PC-9 (cell line): ENCODE measurements at regions of chr19 and their contacts with region 1.

Region 1: DNA sequence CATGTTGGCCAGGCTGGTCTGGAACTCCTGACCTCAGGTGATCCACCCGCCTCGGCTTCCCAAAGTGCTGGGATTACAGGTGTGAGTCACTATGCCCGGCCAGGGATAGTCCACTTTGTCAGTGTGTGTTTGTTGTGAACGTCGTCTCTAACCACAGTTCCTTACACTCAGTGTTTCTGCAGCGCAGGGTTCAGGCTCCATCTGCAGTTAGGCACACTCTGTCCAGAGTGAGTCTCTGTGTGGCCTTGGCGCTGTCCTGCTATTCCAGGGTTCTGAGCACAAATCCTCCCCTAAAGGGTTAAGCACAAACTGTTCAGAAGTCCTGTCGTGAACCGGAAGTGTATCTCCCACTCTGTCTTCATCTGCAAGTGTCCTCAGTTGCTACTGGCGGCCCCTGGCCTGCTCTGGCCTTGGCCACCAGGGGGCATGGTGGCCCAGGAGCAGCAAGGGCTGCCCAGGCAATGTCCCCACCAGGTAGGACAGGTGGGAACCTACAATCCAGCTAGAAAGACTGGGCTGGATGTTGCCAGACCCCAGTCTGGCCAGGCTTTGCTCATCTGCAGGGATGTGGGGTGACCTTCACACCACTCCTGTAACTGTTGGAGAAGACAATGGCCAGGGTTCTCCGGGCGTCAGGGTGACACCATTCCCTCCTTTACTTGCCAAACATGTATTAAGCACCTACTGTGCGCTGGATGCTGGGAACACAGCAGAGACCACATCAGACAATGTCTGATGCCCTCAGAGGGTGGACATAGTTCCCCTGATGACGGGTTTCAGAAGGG is 38.7 kb upstream of the GATAD2A start:
- DNase-seq: peak; percentile 85 to 89
- H3K4me3 ChIP-seq: no peak overlapping the region; the same call in 1 of the 2 replicates
- H3K27ac ChIP-seq: no peak overlapping the region
- H3K4me1 ChIP-seq: peaks cover 30% of the 10 kb centered on the region
- H3K27me3 ChIP-seq: no peaks in the 10 kb centered on the region
- CTCF ChIP-seq: peak; percentile 98

Region 2: DNA sequence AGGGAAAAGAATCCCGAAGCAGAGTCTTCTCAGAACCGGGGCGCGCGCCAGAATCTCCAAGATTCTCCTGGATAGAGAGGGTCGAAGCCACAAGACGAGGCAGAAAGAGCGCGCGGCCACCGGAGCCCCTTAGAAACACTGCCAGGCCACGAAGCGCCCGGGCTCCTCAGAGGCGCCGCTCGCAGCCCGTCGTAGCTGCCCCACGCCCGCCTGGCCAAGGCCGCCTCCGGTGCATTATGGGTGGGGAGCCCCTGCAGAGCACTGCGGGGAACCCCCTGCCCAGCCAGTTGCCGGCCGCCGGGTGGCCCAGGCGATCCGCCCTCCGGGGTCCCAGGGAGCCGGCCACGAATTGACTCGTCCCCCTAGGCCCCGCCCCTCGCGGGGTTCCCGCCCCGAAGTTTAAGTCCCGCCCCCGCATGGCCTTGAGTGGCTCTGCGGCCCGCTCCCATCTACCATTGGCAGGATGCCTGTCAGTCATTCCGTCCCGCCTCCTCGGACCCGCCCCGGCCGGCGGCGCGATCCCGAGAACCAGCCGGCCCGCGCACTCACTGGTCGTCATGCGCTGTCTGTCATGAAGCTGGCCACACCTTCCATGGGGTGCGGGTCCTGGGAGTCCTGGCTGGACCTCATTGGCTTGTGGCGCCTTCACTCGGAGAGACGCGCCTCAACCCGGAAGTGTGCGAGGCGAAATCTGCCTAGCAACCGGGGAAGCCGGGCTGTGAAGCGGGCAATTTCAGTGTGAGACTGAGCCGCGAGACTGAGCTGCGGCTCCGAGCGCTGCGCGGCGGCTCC is 18.5 kb after region 1 on chr19:
- CTCF ChIA-PET with region 1: interaction called, 5 read pairs
- POLR2A ChIA-PET with region 1: interaction called, 4 read pairs
- intact Hi-C with region 1: loop called (anchors 1 kb)
- DNase-seq: peak; percentile 99 to 100
- H3K4me3 ChIP-seq: peak overlapping the region; percentile 56
- H3K27ac ChIP-seq: peak overlapping the region; percentile 68
- H3K4me1 ChIP-seq: peaks cover 33% of the 10 kb centered on the region
- H3K27me3 ChIP-seq: no peaks in the 10 kb centered on the region
- CTCF ChIP-seq: no peak

Region 3: GRCh38 chr19:19399733-19400433 is 33.1 kb after region 1 on chr19:
- CTCF ChIA-PET with region 1: interaction called, 15 read pairs
- POLR2A ChIA-PET with region 1: no interaction called
- intact Hi-C with region 1: loop called (anchors 1 kb)
- DNase-seq: no peak
- H3K4me3 ChIP-seq: no peak overlapping the region
- H3K27ac ChIP-seq: no peak overlapping the region
- H3K4me1 ChIP-seq: peaks cover 27% of the 10 kb centered on the region
- H3K27me3 ChIP-seq: no peaks in the 10 kb centered on the region
- CTCF ChIP-seq: no peak

Region 4: DNA sequence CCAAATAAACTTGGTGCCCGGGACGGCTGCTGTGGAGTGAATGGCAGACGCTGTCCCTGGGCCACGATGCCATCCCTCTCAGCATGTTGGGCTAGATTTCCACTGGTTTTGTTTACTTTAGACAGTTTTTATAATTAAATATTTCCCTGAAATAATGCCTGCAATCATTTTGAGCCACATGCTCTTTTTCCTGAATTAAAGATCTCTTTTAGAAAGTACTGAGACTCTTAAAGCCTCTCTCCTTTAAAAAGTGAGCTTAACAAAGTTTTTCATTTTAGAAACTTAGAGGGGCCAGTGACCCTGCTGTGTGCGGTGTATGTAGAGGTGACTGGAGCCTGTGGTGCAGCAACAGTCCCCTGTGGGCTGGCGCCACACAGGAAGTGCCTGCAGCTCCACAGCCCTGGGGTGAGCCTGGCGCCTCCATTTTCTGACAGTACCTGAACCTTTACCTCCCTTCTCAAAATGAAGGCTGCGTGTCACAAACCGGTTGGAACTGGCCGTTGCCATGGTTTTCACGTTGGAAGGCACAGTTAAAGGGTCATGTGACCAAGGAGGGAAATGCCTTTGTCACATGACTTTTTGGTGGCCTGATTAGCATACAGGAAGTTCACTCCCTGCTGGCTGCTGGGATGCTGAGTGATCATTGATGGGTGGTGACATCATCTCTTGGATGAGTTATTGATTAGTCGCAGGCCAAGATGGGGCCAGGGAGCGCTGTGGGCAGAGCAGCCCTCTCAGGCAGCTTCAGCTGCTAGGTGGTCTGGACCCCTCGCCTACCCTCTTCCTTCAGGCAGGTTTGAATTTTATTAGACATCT is 122.3 kb after region 1 on chr19:
- CTCF ChIA-PET with region 1: interaction called, 7 read pairs
- POLR2A ChIA-PET with region 1: no interaction called
- intact Hi-C with region 1: loop called (anchors 1 kb)
- DNase-seq: peak; percentile 34 to 76
- H3K4me3 ChIP-seq: no peak overlapping the region
- H3K27ac ChIP-seq: peak overlapping the region; percentile 70
- H3K4me1 ChIP-seq: peaks cover 23% of the 10 kb centered on the region
- H3K27me3 ChIP-seq: no peaks in the 10 kb centered on the region
- CTCF ChIP-seq: no peak